ENCODE measurements at regions of chr7 and their contacts with region 1.

Region 1: GRCh38 chr7:88111136-88111743 is 108.6 kb downstream of the SRI start:
- DNase-seq: no peak
- ATAC-seq: no peak
- H3K4me3 Mint-ChIP-seq: no peak overlapping the region
- H3K27ac Mint-ChIP-seq: no peak overlapping the region
- H3K4me1 Mint-ChIP-seq: peaks cover 25% of the 10 kb centered on the region
- H3K27me3 Mint-ChIP-seq: no peaks in the 10 kb centered on the region
- CTCF ChIP-seq: no peak; the same call in 1 of the 2 replicates

Region 2: GRCh38 chr7:87926581-87927461 is 184.4 kb before region 1 on chr7:
- CTCF ChIA-PET with region 1: interaction called, 15 read pairs
- POLR2A ChIA-PET with region 1: no interaction called
- DNase-seq: peak; percentile 74
- ATAC-seq: peak; percentile 95
- H3K4me3 Mint-ChIP-seq: peak overlapping the region; percentile 30; the same call in 1 of the 2 replicates
- H3K27ac Mint-ChIP-seq: peak overlapping the region; percentile 84
- H3K4me1 Mint-ChIP-seq: peaks cover 27% of the 10 kb centered on the region
- H3K27me3 Mint-ChIP-seq: peaks cover 4% of the 10 kb centered on the region
- CTCF ChIP-seq: peak; percentile 19; the same call in 1 of the 2 replicates

Region 3: DNA sequence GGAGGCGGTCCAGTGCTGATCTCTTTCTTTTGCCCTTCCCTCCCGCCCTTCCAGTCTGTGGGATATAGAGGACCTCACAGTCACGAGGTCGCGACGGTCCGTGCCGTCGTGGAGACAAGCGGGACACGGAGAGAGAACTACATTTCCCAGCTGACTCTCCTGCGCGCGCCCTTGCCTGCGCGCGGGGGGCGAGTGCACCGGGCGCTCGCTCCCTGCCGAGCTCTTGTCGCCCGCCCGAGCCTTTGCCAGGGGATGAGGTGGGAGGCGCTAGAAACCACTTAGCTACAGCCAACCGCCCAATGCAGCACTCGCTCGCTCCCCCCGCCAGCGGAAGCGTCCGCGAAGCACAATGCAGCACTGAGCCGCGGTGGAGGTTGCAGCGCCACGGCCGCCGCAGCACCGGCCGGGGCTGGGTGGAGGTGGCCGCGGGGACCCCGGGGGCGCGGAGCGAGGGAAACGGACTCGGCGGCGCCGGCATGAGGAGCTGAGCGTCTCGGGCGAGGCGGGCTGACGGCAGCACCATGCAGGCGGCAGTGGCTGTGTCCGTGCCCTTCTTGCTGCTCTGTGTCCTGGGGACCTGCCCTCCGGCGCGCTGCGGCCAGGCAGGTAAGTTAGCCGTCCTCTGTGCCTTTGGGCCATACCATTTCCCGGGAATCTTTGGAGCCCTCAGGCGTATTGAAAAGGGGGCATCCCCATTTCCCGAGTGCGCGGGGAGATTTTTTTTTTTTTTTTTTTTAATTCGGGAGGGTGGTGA is 177.1 kb before region 1 on chr7 and contains the start of gene ADAM22:
- CTCF ChIA-PET with region 1: interaction called, 15 read pairs
- POLR2A ChIA-PET with region 1: no interaction called
- DNase-seq: peak; percentile 90
- ATAC-seq: peak; percentile 95
- H3K4me3 Mint-ChIP-seq: peak within 1 kb of the TSS; percentile 91
- H3K27ac Mint-ChIP-seq: peak within 1 kb of the TSS; percentile 86
- H3K4me1 Mint-ChIP-seq: peaks cover 8% of the 10 kb centered on the region
- H3K27me3 Mint-ChIP-seq: peaks cover 16% of the 10 kb centered on the region
- CTCF ChIP-seq: no peak
- total RNA-seq, gene ADAM22: 12.4 to 14.5 TPM (median 14.5 TPM) in 3 replicates

Measured in WTC11 (cell line).